Dorsolateral prefrontal cortex (tissue), 120 donors: ENCODE measurements at regions of chr5 and their contacts with region 1.

Region 1: GRCh38 chr5:123875561-123876283 is 363.7 kb downstream of the CSNK1G3 start:
- DNase-seq: peak; percentile 5 to 72 (median 59)
- H3K4me3 ChIP-seq: peak overlapping the region in 46 of 59 donors; percentile 1 to 64 (median 32)
- H3K27ac ChIP-seq: peak overlapping the region; percentile 2 to 96 (median 91)
- H3K27me3 ChIP-seq: no peaks in the 10 kb centered on the region
- CTCF ChIP-seq: peak in 3 of 56 donors; percentile 13 to 21 (median 16)

Region 2: GRCh38 chr5:123700398-123701287 is 175.1 kb before region 1 on chr5:
- intact Hi-C with region 1: loop called (anchors 5 to 10 kb)
- DNase-seq: no peak
- H3K4me3 ChIP-seq: no peak overlapping the region
- H3K27ac ChIP-seq: no peak overlapping the region
- H3K27me3 ChIP-seq: no peaks in the 10 kb centered on the region
- CTCF ChIP-seq: no peak

Region 3: GRCh38 chr5:123752552-123753179 is 123.1 kb before region 1 on chr5:
- intact Hi-C with region 1: loop called in 1 of 2 experiments (anchors 10 kb)
- DNase-seq: no peak
- H3K4me3 ChIP-seq: no peak overlapping the region
- H3K27ac ChIP-seq: peak overlapping the region in 24 of 59 donors; percentile 1 to 73 (median 26)
- H3K27me3 ChIP-seq: no peaks in the 10 kb centered on the region
- CTCF ChIP-seq: no peak

Region 4: DNA sequence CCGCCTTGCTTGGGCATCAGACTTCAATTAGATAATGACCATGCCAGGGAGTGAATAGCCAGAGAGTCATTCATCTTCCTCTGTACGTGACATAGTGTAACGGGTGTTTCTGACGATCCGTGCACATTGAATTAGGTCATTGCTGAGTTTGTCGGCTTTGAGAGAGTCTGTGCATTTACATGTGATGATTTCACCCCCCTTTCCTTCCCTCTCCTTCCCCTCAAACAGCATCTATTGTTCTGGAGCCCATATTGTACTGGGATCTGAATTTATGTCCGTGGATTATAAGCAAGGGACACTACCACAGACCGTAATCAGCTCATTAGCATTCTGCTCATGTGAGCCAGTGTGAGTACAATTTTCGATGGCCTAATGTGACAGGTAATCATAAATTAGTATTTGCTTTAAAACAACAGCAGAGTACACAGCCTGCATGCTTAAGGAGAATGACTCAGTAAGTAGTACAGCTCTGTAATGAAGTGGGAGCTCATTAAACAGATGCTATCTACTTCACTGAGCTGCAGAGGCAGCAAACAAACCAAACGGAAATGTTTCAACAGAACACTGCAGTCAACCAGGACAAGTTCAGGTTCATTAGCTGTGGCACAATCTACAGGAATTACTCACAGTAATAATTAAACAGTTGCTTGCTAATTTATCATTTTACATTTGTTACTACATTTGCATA is 61.6 kb before region 1 on chr5:
- intact Hi-C with region 1: loop called in 1 of 2 experiments (anchors 5 kb)
- DNase-seq: no peak
- H3K4me3 ChIP-seq: peak overlapping the region in 52 of 59 donors; percentile 2 to 57 (median 26)
- H3K27ac ChIP-seq: peak overlapping the region in 49 of 59 donors; percentile 1 to 78 (median 55)
- H3K27me3 ChIP-seq: no peaks in the 10 kb centered on the region
- CTCF ChIP-seq: no peak

Region 5: GRCh38 chr5:124124711-124125229 is 249.0 kb after region 1 on chr5:
- intact Hi-C with region 1: loop called in 1 of 2 experiments (anchors 10 kb)
- DNase-seq: no peak
- H3K4me3 ChIP-seq: no peak overlapping the region
- H3K27ac ChIP-seq: peak overlapping the region in 4 of 59 donors; percentile 4 to 47 (median 28)
- H3K27me3 ChIP-seq: no peaks in the 10 kb centered on the region
- CTCF ChIP-seq: no peak

Region 6: GRCh38 chr5:124162779-124163532 is 287.2 kb after region 1 on chr5:
- intact Hi-C with region 1: loop called in 1 of 2 experiments (anchors 10 kb)
- DNase-seq: peak; percentile 33 to 92 (median 86)
- H3K4me3 ChIP-seq: peak overlapping the region in 49 of 59 donors; percentile 0 to 55 (median 30)
- H3K27ac ChIP-seq: peak overlapping the region; percentile 53 to 95 (median 89)
- H3K27me3 ChIP-seq: no peaks in the 10 kb centered on the region
- CTCF ChIP-seq: peak in 5 of 56 donors; percentile 5 to 20 (median 12)

Region 7: DNA sequence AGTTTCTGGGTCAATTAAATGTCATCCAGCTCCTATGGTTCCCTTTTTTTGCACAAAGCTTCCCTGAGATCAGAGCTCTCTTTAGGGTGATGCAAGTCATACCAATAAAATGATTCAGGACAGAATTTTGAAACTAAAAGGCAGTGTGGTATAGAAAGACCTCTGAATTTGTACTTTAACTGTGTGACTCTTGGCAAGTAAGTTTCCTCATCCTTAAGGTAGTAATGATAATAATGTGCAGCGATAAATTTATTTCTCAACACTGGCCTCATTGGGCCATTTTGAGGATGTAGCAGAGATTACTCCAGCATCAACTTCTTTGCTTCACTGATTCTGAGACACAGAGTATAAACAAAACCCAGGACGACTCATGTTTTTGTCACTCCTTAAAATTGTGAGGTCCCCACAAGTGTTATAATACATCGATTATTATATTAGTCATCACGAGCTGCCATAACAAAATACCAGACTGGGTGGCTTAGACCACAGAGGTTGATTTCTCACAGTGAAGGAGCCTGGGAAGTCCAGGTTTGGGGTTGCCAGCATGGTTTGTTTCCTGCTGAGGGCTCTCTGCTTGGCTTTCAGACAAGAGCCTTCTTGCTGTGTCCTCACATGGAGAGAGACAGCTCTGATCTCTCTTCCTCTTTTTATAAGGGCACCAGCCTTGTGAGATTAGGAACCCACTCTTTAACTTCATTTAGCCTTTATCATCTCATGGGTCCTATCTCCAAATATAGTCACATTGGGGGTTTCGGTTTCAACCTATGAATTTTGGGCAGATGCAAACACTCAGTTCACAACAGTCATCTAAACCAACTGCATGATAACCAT is 577.7 kb after region 1 on chr5:
- intact Hi-C with region 1: loop called in 1 of 2 experiments (anchors 10 kb)
- DNase-seq: no peak
- H3K4me3 ChIP-seq: no peak overlapping the region
- H3K27ac ChIP-seq: peak overlapping the region in 4 of 59 donors; percentile 21 to 73 (median 48)
- H3K27me3 ChIP-seq: no peaks in the 10 kb centered on the region
- CTCF ChIP-seq: no peak